AG04450 (cell line): ENCODE measurements at regions of chr3 and their contacts with region 1.

Region 1: DNA sequence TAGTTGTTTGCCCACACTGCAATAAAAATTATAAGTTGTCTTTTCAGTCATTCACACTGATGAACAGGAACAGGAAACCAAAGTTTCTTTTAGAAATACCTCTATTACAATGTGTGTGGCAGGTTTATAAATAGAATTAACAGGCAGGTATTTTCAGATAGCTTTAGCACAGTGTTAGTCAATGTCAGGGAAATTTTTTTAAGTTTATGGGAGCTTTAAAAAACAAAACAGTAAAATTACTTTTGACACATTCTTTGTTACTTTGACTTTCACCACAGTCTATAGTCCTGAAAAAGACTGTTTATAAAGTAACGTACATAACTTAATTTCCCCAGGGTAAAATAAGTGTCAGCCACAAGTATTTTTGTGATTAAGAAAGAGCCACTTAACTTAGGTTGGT is 38.1 kb downstream of the SERPINI1 start:
- DNase-seq: no peak
- H3K4me3 ChIP-seq: no peak overlapping the region
- H3K27ac ChIP-seq: no peak overlapping the region
- H3K27me3 ChIP-seq: no peaks in the 10 kb centered on the region
- CTCF ChIP-seq: no peak

Region 2: DNA sequence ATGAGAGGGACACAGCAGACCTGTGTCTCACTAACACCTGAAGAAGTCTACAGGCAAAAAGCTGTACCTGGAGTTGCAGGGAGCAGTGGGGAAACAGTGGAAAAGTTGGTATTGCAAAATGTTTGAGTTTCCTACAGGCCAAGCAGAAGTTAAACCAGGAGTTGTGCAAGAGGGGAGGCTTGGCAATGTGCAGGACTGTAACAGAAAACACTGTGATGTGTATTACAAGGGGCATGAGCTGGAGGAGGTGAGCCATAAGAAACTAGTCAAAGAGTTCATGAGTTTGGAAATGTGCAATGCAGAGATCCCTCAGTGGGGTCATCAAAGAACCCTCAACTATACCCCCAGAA is 252.6 kb before region 1 on chr3:
- CTCF ChIA-PET with region 1: no interaction called
- POLR2A ChIA-PET with region 1: no interaction called
- DNase-seq: no peak
- H3K4me3 ChIP-seq: no peak overlapping the region
- H3K27ac ChIP-seq: no peak overlapping the region
- H3K27me3 ChIP-seq: no peaks in the 10 kb centered on the region
- CTCF ChIP-seq: no peak

Region 3: DNA sequence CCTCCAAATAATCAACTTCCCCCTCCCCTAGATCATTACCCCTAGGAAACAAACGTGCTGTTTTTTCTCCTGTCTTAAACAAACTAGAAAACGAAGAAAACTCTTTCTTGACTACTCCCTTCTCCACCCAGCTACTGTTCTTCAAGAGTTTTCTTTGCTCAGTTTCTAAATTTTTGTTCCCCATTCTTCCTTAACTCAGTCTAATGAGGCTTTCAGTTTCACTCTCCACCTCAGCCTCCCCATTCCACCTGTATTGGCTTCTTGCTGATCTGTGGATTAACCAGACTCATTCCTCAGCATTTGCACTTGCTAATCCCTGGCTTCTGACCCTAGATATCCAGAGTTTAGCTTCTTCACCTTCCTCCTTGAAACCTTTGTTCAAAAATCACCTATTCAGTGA is 11.3 kb before region 1 on chr3:
- CTCF ChIA-PET with region 1: interaction called, 12 read pairs
- POLR2A ChIA-PET with region 1: no interaction called
- DNase-seq: no peak
- H3K4me3 ChIP-seq: no peak overlapping the region
- H3K27ac ChIP-seq: no peak overlapping the region
- H3K27me3 ChIP-seq: no peaks in the 10 kb centered on the region
- CTCF ChIP-seq: no peak

Region 4: GRCh38 chr3:167787440-167787839 is 13.9 kb after region 1 on chr3:
- CTCF ChIA-PET with region 1: no interaction called
- POLR2A ChIA-PET with region 1: no interaction called
- DNase-seq: no peak
- H3K4me3 ChIP-seq: no peak overlapping the region
- H3K27ac ChIP-seq: no peak overlapping the region
- H3K27me3 ChIP-seq: no peaks in the 10 kb centered on the region
- CTCF ChIP-seq: no peak

Region 5: DNA sequence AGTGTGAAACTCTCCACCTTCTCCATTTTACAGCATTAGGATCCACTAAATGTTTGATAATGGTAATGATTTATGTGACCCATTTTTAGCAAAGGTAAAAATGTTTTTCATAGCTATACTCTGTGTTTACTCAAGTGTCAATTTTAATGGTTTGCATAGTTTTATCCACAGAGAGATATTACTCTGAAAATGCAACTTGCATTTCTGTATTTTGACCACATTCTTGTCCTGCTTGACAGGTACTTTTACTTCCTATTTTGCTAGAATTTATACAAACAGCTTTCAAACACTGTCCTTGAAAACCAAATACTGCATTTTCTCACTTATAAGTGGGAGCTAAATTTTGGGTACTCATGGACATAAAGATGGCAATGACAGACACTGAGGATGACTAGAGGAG is 24.9 kb after region 1 on chr3:
- CTCF ChIA-PET with region 1: no interaction called
- POLR2A ChIA-PET with region 1: no interaction called
- DNase-seq: no peak
- H3K4me3 ChIP-seq: no peak overlapping the region
- H3K27ac ChIP-seq: no peak overlapping the region
- H3K27me3 ChIP-seq: no peaks in the 10 kb centered on the region
- CTCF ChIP-seq: no peak